CD4-positive, alpha-beta memory T cell (primary cell): ENCODE measurements at regions of chr21 and their contacts with region 1.

Region 1: GRCh38 chr21:32770871-32771523 is 558 bp downstream of the PAXBP1 start:
- DNase-seq: no peak
- H3K4me3 ChIP-seq: peak overlapping the region; percentile 77 to 85
- H3K4me3 Mint-ChIP-seq: peak overlapping the region; percentile 91 to 98 (median 96)
- H3K27ac ChIP-seq: peak overlapping the region; percentile 71
- H3K27ac Mint-ChIP-seq: peak overlapping the region; percentile 55 to 97 (median 94)
- H3K4me1 ChIP-seq: peaks cover 57% of the 10 kb centered on the region
- H3K4me1 Mint-ChIP-seq: peaks cover 39 to 70% (median 56%) of the 10 kb centered on the region in 4 donors
- H3K27me3 ChIP-seq: no peaks in the 10 kb centered on the region
- H3K27me3 Mint-ChIP-seq: peaks cover 0 to 3% of the 10 kb centered on the region in 2 donors

Region 2: DNA sequence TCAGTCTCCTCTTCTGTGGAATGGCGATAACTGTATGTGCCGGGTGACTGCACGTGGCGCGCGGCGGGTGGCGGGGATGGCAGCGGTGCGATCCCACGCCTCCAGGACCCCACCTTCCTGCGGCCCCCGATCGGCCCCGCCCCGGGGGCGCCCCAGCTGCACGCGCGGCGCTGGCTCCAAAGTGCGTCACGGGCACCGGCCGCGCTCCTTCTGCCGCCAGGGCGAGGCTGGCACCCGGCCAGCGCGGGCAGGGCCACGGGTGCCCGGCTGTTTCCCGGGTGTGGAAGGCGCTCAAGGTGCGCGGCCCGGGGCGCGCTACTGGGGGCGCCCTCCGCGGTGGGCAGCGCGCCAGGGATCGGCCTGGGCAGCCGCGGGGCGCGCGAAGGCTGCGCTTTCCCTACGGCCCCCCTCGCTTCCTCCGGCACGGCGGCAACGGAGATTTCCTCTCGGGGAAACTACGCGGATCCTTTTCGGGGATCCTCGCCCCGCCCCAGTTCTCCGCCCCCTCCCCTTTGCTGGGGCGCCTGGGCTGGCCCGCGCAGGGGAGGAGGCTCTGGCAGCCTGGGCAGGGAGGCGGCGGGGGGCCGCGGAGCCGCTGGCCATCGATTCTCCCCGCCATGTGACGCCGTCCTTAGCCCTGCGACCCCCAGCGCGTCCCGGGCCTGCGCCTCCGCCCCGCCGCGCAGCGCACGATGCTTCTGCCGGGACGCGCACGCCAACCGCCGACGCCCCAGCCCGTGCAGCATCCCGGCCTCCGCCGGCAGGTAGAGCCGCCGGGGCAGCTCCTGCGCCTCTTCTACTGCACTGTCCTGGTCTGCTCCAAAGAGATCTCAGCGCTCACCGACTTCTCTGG is 358.6 kb before region 1 on chr21 and contains the start of gene EVA1C:
- CTCF ChIA-PET with region 1: no interaction called
- POLR2A ChIA-PET with region 1: interaction called, 3 read pairs
- intact Hi-C with region 1: loop called (anchors 5 kb)
- DNase-seq: peak; percentile 81 to 87 (median 85)
- H3K4me3 ChIP-seq: peak within 1 kb of the TSS; percentile 40 to 83
- H3K4me3 Mint-ChIP-seq: peak within 1 kb of the TSS; percentile 94 to 98 (median 96)
- H3K27ac ChIP-seq: peak within 1 kb of the TSS; percentile 86
- H3K27ac Mint-ChIP-seq: peak within 1 kb of the TSS; percentile 95 to 99 (median 97)
- H3K4me1 ChIP-seq: peaks cover 34% of the 10 kb centered on the region
- H3K4me1 Mint-ChIP-seq: peaks cover 32 to 71% (median 43%) of the 10 kb centered on the region in 4 donors
- H3K27me3 ChIP-seq: no peaks in the 10 kb centered on the region
- H3K27me3 Mint-ChIP-seq: no peaks in the 10 kb centered on the region
- total RNA-seq, gene EVA1C: 17.1 to 17.2 TPM

Region 3: GRCh38 chr21:32612075-32612998 is 158.7 kb before region 1 on chr21 and contains the start of gene CFAP298:
- CTCF ChIA-PET with region 1: interaction called, 7 read pairs
- POLR2A ChIA-PET with region 1: interaction called, 20 read pairs
- intact Hi-C with region 1: loop called (anchors 1 kb)
- DNase-seq: peak; percentile 90 to 97 (median 92)
- H3K4me3 ChIP-seq: peak within 1 kb of the TSS; percentile 95 to 99
- H3K4me3 Mint-ChIP-seq: peak within 1 kb of the TSS; percentile 91 to 98 (median 96)
- H3K27ac ChIP-seq: peak within 1 kb of the TSS; percentile 86
- H3K27ac Mint-ChIP-seq: peak within 1 kb of the TSS; percentile 98 to 99 (median 99)
- H3K4me1 ChIP-seq: peaks cover 12% of the 10 kb centered on the region
- H3K4me1 Mint-ChIP-seq: peaks cover 8 to 32% (median 20%) of the 10 kb centered on the region in 4 donors
- H3K27me3 ChIP-seq: no peaks in the 10 kb centered on the region
- H3K27me3 Mint-ChIP-seq: peaks cover 1 to 2% of the 10 kb centered on the region in 2 donors
- total RNA-seq, gene CFAP298: 29.4 to 39.1 TPM

Region 4: DNA sequence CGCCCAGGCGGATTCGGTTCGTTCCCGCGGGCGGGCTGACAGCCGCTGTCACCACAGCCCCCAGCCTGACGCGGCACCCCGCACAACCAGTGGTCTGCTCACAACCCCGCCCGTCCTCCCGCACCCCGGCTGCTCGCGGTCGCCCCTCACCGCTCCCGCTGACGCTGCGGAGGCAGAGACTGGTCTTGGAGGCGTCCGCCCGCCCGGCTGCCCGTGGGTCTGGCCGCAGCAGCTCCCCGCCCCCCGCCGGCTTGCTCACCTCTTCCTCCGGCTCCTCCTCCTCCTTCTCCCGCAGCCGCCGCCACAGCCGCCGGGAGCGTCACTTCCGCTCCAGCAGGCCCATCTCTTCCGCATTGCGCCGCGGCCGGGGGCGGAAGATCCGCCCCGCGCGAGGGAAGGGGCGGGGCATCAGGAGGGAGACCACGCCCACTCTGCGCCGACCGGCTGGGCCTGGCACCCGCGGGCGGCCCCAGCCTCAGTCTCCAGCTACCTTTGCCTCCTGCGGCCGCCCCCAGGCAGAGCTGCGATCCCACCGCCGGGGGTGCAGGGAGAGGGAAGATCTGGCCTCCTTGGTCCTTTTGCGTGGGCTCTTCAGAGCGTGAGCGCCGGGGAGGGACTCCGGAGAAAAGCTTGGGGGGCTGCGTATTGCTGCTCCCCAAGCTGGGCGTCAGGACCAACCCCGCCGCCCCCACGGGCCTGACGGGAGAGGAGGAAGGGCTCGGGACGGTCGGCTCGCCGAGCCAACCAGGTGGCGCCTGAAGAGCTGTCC is 43.1 kb before region 1 on chr21 and contains the start of gene SYNJ1:
- CTCF ChIA-PET with region 1: interaction called, 34 read pairs
- POLR2A ChIA-PET with region 1: interaction called, 90 read pairs
- intact Hi-C with region 1: loop called (anchors 1 kb)
- DNase-seq: peak; percentile 94 to 95 (median 94)
- H3K4me3 ChIP-seq: peak within 1 kb of the TSS; percentile 62 to 92
- H3K4me3 Mint-ChIP-seq: peak within 1 kb of the TSS; percentile 97 to 100 (median 98)
- H3K27ac ChIP-seq: peak within 1 kb of the TSS; percentile 75
- H3K27ac Mint-ChIP-seq: peak within 1 kb of the TSS; percentile 90 to 98 (median 98)
- H3K4me1 ChIP-seq: peaks cover 58% of the 10 kb centered on the region
- H3K4me1 Mint-ChIP-seq: peaks cover 38 to 76% (median 52%) of the 10 kb centered on the region in 4 donors
- H3K27me3 ChIP-seq: no peaks in the 10 kb centered on the region
- H3K27me3 Mint-ChIP-seq: no peaks in the 10 kb centered on the region
- total RNA-seq, gene SYNJ1: 27.6 to 29.4 TPM

Region 5: DNA sequence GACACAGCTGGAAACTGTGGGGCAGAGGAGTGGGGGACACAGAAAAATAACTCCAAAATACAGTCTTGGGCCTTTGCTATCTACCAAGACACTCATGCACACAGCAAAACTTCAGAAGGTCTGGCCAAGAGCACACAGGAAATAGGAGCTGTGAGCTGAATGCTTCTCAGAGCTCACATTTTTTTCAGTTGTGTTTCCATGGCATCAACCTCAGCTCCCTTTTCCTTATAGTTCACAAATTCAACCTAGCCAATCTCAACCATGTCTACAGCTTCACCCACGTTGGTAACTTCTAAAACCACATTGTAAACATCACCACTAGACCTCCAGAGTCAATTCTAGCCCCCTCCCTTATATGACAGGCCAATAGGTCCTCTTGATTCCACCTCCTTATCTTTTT is 23.6 kb before region 1 on chr21:
- CTCF ChIA-PET with region 1: interaction called, 10 read pairs
- POLR2A ChIA-PET with region 1: interaction called, 20 read pairs
- intact Hi-C with region 1: no loop called
- DNase-seq: no peak
- H3K4me3 ChIP-seq: no peak overlapping the region
- H3K4me3 Mint-ChIP-seq: no peak overlapping the region
- H3K27ac ChIP-seq: no peak overlapping the region
- H3K27ac Mint-ChIP-seq: peak overlapping the region in 3 of 7 donors; percentile 42 to 71 (median 45)
- H3K4me1 ChIP-seq: no peaks in the 10 kb centered on the region
- H3K4me1 Mint-ChIP-seq: peaks cover 0 to 19% (median 11%) of the 10 kb centered on the region in 4 donors
- H3K27me3 ChIP-seq: no peaks in the 10 kb centered on the region
- H3K27me3 Mint-ChIP-seq: no peaks in the 10 kb centered on the region

Region 6: DNA sequence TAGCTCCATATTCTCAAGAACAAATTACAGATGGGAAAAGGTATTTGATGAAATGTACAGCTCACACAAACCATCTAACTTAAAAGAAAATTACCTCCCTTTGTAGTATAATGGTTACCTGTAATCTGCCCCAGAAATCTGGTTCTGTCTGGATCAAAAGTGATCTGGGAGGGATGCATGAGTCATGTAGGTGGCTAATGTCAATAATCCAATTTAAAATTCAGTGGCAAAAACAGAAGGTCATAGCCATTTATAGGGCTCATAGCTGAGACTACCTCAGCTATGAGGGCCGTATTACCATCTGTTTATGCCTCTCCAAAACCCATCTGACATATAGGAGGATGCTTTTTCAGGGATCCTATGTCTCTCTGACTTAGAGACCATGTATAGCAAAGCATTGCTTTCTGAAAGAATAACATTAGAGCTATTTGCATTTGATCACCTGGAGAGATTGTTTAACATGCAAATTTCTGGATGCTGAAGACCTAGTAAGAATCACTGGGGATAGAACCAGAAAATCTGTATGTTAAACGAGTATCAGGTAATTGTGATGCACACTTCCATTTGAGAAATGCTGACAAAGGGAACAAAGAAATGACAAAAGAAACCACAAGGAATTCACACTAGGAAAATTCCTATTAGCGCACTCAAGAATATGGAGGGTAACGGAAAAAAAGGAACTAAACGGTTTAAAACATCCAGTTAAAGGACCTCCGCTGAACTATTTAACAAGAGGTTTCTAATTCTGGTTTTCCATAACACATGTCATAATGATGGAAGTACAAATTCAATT is 17.0 kb before region 1 on chr21:
- CTCF ChIA-PET with region 1: interaction called, 33 read pairs
- POLR2A ChIA-PET with region 1: interaction called, 20 read pairs
- intact Hi-C with region 1: no loop called
- DNase-seq: no peak
- H3K4me3 ChIP-seq: no peak overlapping the region
- H3K4me3 Mint-ChIP-seq: no peak overlapping the region
- H3K27ac ChIP-seq: no peak overlapping the region
- H3K27ac Mint-ChIP-seq: peak overlapping the region in 2 of 7 donors; percentile 1 to 37
- H3K4me1 ChIP-seq: no peaks in the 10 kb centered on the region
- H3K4me1 Mint-ChIP-seq: peaks cover 1 to 10% (median 4%) of the 10 kb centered on the region in 4 donors
- H3K27me3 ChIP-seq: no peaks in the 10 kb centered on the region
- H3K27me3 Mint-ChIP-seq: no peaks in the 10 kb centered on the region

Region 7: DNA sequence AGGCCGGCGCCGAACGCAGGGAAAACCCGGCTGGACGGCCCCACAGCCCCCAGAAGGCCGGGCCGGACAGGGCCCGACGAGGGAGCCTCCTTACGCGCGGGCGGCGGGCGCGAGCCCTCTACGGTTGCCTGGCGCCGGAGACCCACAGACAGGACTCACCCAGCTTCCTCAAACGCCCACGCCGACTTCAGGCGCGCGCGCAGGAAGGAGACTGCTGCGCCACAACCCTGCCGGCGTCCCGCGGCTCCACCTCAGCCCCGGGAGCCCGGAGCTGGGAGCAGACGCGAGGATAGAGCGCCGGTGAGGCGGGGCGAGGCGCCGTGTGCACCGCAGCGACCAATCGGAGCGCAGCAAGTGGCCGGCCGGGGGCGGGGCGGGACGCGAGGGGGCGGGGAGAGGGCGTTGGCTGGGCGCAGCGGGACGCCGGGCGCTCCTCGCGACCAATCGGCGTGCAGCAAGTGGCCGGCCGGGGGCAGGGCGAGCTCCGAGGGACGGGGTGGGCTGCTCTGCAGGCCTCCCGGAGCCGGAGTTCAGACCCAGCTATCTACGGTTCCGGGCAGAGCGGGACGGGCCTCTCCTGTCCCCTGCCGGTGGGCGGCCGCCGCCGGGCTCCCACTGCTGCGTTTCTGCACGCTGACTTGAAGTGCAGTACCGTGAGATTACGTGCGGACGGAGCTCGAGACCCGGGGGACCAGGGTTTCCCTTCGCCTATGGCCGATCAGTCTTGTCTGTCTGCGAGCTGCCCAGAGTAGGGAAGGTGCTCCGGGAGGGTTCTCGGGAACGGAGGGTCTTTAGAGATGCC is 708.9 kb after region 1 on chr21 and contains the start of gene TMEM50B:
- CTCF ChIA-PET with region 1: interaction called, 5 read pairs
- POLR2A ChIA-PET with region 1: interaction called, 12 read pairs
- intact Hi-C with region 1: loop called (anchors 1 kb)
- DNase-seq: peak; percentile 91 to 95 (median 94)
- H3K4me3 ChIP-seq: peak within 1 kb of the TSS; percentile 71 to 95
- H3K4me3 Mint-ChIP-seq: peak within 1 kb of the TSS; percentile 92 to 96 (median 94)
- H3K27ac ChIP-seq: peak within 1 kb of the TSS; percentile 91
- H3K27ac Mint-ChIP-seq: peak within 1 kb of the TSS; percentile 87 to 97 (median 95)
- H3K4me1 ChIP-seq: peaks cover 14% of the 10 kb centered on the region
- H3K4me1 Mint-ChIP-seq: peaks cover 8 to 29% (median 19%) of the 10 kb centered on the region in 4 donors
- H3K27me3 ChIP-seq: no peaks in the 10 kb centered on the region
- H3K27me3 Mint-ChIP-seq: no peaks in the 10 kb centered on the region
- total RNA-seq, gene TMEM50B: 110 to 112 TPM